MCF 10A (cell line): ENCODE measurements at regions of chr22 and their contacts with region 1.

Region 1: DNA sequence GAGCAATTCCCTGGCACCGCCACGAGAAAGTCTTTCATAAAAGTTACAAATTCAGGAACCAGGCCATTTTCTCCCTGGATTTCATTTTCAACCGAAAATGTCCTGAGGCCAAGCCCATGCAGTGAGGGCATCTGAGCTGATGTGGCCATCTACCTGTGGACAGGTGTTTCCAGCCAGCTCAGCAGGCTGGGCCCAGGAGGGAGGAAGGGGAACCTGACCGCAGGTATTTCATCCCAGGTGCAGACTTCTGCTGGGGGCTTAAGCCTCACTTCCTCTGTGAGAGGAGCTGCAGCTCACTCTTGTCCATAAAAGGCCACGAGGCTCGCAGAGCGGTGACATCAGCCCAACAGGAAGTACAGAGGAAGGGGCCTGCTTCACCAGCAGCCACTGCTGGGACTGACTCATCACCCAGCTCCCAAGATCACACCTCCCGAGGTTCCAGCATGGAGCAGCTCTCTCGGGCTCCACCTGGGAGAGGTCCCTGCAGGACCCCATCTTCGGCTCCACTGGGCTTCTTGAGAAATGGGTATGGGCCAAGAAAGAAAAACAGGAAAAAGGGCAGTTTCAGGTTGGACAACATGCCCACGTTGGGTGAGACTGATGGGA is 56.4 kb downstream of the MYH9 start:
- DNase-seq: peak; percentile 97
- H3K4me3 Mint-ChIP-seq: peak overlapping the region; percentile 64
- H3K27ac Mint-ChIP-seq: peak overlapping the region; percentile 98
- H3K4me1 Mint-ChIP-seq: peaks cover 73% of the 10 kb centered on the region
- H3K27me3 Mint-ChIP-seq: no peaks in the 10 kb centered on the region
- CTCF ChIP-seq: no peak

Region 2: DNA sequence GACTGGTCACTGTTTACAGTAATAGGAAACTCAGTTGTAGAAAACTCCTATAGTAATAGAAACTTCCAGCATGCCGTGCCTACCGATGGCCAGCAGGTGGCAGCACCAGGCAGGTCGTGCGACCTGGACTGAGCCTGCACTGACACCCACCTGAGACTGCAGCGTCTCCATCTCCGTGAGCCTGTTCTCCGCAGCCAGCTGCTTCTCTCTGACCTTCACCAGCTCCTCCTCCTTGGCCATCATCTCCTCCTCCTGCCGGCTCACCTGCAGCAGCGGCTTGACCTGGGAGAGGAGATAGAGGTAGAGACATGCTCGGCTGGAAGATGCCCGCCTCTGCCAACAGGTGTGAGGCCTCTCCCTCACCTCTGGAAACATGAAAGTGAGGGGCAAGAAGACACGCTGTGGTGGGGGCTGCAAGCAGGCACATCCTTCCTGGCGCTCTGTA is 30.0 kb before region 1 on chr22:
- CTCF ChIA-PET with region 1: interaction called, 12 read pairs
- POLR2A ChIA-PET with region 1: interaction called, 5 read pairs
- intact Hi-C with region 1: no loop called
- DNase-seq: peak; percentile 73
- H3K4me3 Mint-ChIP-seq: no peak overlapping the region
- H3K27ac Mint-ChIP-seq: no peak overlapping the region
- H3K4me1 Mint-ChIP-seq: peaks cover 7% of the 10 kb centered on the region
- H3K27me3 Mint-ChIP-seq: no peaks in the 10 kb centered on the region
- CTCF ChIP-seq: peak; percentile 94

Region 3: GRCh38 chr22:36365020-36365411 is 33.6 kb after region 1 on chr22:
- CTCF ChIA-PET with region 1: interaction called, 3 read pairs
- POLR2A ChIA-PET with region 1: interaction called, 87 read pairs
- intact Hi-C with region 1: no loop called
- DNase-seq: peak; percentile 93
- H3K4me3 Mint-ChIP-seq: peak overlapping the region; percentile 8
- H3K27ac Mint-ChIP-seq: peak overlapping the region; percentile 87
- H3K4me1 Mint-ChIP-seq: peaks cover 54% of the 10 kb centered on the region
- H3K27me3 Mint-ChIP-seq: no peaks in the 10 kb centered on the region
- CTCF ChIP-seq: no peak

Region 4: DNA sequence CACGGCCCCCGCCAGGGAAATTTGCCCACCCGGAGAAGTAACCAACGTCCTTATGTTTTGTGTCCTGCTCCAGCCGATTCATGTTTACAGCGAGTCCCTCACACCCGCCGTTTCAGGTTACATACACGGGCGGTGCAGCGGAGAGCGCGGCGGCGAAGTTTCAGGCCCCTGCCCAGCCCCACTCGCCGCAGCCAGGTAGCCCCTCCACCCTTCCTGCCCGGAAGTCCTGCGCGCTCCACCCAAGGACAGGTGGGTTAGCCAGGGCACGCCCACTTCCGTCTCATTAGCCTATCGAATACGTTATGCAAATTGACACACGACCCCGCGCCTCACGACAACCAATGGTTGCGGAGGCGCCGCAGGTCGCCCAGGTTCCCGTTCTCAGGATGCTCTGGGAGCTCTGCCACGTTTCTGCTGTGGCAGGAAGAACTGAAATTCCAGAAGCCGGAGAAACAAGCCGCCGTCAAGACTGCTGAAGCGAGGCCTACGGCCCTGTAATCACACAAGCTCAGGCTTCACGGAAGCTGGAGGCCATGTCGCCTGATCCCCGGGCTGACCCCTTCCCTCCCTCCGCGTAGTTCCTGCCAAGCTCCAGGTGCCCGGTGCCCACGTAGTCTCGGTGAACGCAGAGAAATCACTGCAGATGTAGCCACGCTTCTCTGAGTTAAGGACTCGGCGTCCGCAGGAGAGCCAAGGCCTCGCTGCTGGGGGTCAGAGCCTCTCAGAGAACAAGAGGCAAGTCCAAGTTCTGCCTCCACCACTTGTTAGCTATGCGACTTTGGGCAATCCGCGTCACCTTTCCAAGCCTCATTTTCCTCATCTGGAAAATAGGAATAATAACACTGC is 78.7 kb after region 1 on chr22:
- CTCF ChIA-PET with region 1: no interaction called
- POLR2A ChIA-PET with region 1: interaction called, 13 read pairs
- intact Hi-C with region 1: no loop called
- DNase-seq: peak; percentile 97
- H3K4me3 Mint-ChIP-seq: peak overlapping the region; percentile 78
- H3K27ac Mint-ChIP-seq: peak overlapping the region; percentile 85
- H3K4me1 Mint-ChIP-seq: peaks cover 26% of the 10 kb centered on the region
- H3K27me3 Mint-ChIP-seq: no peaks in the 10 kb centered on the region
- CTCF ChIP-seq: no peak

Region 5: DNA sequence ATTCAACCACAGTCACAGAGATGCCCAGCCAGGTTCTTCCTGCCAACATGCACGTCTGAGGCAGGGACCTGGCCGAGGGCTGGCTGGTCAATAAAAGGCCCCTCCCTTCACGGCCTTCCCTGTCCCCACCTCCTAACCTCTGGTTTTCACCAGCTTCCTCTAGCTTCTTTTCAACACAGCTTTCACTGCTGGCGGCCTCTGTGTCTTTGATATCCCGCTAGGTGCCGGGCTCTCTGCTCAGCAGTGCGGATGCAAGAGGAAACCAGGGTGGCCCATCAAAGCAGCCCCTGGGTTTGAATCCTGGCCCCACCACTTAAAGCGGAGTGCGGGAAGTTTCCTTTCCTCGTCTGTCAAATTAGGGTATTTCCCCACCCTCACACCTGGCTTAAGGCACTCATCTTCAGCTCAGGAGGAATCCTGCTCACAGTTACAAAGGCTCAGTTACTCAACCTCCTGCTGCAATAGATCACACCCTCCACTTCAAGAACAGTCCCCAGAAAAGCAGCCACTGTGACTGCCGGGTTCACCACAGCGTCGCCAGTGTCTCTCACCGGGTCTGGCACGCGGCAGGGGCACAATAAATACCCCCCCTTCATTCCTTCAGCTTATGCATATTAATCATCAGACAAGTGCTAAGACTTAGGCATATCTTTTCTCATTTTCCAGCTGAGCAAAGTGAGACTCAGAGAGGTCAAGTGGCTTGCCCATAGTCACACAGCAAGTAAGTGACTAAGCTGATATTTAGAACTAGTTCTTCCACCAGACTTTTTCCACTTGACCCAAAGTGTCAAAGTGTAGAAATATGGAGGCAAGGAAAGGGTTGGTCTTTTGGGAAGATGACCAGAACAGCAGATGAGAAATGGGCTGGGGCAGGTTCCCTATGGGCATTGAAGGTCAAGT is 104.4 kb after region 1 on chr22:
- CTCF ChIA-PET with region 1: no interaction called
- POLR2A ChIA-PET with region 1: no interaction called
- intact Hi-C with region 1: no loop called
- DNase-seq: no peak
- H3K4me3 Mint-ChIP-seq: no peak overlapping the region
- H3K27ac Mint-ChIP-seq: no peak overlapping the region
- H3K4me1 Mint-ChIP-seq: peaks cover 35% of the 10 kb centered on the region
- H3K27me3 Mint-ChIP-seq: no peaks in the 10 kb centered on the region
- CTCF ChIP-seq: no peak

Region 6: DNA sequence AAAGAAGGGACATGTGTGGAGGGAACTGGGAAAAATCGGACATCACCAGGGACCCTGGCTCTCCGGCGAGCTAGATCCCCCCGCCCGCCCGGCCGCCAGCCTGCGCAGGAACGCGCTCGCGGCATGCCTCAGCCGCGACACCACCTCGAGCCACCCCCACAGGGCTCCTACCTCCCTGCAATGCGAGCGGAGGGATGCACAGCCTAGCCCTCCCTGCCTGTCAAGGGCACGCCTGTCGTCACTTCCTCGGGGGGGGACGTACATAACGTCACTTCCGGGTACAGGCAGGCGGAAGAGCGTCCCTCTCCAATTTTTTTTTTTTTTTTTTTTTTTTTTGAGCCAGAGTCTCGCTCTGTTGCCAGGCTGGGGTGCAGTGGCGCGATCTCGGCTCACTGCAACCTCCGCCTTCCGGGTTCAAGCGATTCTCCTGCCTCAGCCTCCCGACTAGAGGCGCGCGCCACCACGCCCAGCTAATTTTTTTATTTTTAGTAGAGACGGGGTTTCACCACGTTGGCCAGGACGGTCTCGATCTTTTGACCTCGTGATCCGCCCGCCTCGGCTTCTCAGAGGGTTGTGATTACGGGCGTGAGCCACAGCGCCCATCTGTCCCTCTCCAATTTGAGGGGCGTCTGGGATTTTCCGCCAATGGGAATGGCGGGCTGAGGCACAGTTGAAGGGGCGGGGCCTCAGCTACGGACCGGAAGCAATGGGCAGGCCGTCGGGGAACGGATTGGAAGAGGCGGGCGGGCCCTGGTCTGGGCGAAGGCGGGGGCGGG is 150.2 kb after region 1 on chr22 and contains the start of gene TXN2:
- CTCF ChIA-PET with region 1: interaction called, 3 read pairs
- POLR2A ChIA-PET with region 1: interaction called, 10 read pairs
- intact Hi-C with region 1: no loop called
- DNase-seq: peak; percentile 97
- H3K4me3 Mint-ChIP-seq: peak within 1 kb of the TSS; percentile 96
- H3K27ac Mint-ChIP-seq: peak within 1 kb of the TSS; percentile 91
- H3K4me1 Mint-ChIP-seq: peaks cover 10% of the 10 kb centered on the region
- H3K27me3 Mint-ChIP-seq: no peaks in the 10 kb centered on the region
- CTCF ChIP-seq: no peak
- total RNA-seq, gene TXN2: 61.5 and 83.2 TPM in 2 replicates